ENCODE measurements at regions of chr19 and their contacts with region 1.

Region 1: DNA sequence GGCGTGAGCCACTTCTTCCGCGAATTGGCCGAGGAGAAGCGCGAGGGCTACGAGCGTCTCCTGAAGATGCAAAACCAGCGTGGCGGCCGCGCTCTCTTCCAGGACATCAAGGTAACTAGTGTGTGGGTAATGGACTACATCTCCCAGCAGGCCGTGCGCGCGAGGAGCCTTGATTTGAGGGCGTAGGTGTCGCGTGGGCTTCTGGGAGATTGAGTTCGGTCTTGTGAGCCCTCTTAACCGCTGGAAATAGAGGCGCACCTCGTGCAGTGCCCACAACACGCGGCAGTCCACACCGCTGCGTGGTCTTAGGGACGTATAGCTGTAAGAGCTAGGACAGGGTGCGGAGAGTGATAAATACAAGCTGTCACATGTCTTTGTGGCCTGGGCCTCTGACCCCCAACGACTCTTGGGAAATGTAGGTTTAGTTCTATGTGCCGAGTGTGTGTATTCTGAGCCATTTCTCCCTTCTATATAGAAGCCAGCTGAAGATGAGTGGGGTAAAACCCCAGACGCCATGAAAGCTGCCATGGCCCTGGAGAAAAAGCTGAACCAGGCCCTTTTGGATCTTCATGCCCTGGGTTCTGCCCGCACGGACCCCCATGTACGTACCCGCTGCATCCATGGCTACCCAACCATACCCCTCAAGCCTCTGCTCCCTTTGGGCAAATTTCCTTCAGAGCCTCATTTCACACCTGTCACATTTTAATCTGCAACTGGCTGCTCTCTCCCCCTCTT is 864 bp downstream of the FTL start:
- DNase-seq: peak; percentile 78 to 95 (median 89)
- ATAC-seq: peak; percentile 63 to 77 (median 69)
- H3K4me3 ChIP-seq: peak overlapping the region; percentile 80 to 81
- H3K4me3 Mint-ChIP-seq: peak overlapping the region; percentile 98 to 100 (median 100)
- H3K27ac ChIP-seq: peak overlapping the region; percentile 64
- H3K27ac Mint-ChIP-seq: peak overlapping the region; percentile 99 to 100
- H3K4me1 ChIP-seq: peaks cover 22 to 58% of the 10 kb centered on the region in 2 experiments
- H3K4me1 Mint-ChIP-seq: peaks cover 58 to 71% (median 62%) of the 10 kb centered on the region in 3 donors
- H3K27me3 ChIP-seq: no peaks in the 10 kb centered on the region
- H3K27me3 Mint-ChIP-seq: no peaks in the 10 kb centered on the region

Region 2: GRCh38 chr19:48899781-48900476 is 66.0 kb before region 1 on chr19 and contains the start of gene NUCB1:
- CTCF ChIA-PET with region 1: interaction called in 1 of 2 experiments, 23 read pairs
- POLR2A ChIA-PET with region 1: no interaction called
- DNase-seq: peak; percentile 94 to 99 (median 97)
- ATAC-seq: peak; percentile 93 to 96 (median 95)
- H3K4me3 ChIP-seq: peak within 1 kb of the TSS; percentile 72 to 89
- H3K4me3 Mint-ChIP-seq: peak within 1 kb of the TSS; percentile 91 to 99 (median 91)
- H3K27ac ChIP-seq: peak within 1 kb of the TSS; percentile 64
- H3K27ac Mint-ChIP-seq: peak within 1 kb of the TSS; percentile 97 to 98
- H3K4me1 ChIP-seq: peaks cover 2 to 48% of the 10 kb centered on the region in 2 experiments
- H3K4me1 Mint-ChIP-seq: peaks cover 30 to 52% (median 33%) of the 10 kb centered on the region in 3 donors
- H3K27me3 ChIP-seq: peaks cover 0 to 28% of the 10 kb centered on the region in 2 experiments
- H3K27me3 Mint-ChIP-seq: peaks cover under 1 to 7% of the 10 kb centered on the region in 2 donors
- total RNA-seq, gene NUCB1: 122 to 177 (median 165) TPM

Region 3: DNA sequence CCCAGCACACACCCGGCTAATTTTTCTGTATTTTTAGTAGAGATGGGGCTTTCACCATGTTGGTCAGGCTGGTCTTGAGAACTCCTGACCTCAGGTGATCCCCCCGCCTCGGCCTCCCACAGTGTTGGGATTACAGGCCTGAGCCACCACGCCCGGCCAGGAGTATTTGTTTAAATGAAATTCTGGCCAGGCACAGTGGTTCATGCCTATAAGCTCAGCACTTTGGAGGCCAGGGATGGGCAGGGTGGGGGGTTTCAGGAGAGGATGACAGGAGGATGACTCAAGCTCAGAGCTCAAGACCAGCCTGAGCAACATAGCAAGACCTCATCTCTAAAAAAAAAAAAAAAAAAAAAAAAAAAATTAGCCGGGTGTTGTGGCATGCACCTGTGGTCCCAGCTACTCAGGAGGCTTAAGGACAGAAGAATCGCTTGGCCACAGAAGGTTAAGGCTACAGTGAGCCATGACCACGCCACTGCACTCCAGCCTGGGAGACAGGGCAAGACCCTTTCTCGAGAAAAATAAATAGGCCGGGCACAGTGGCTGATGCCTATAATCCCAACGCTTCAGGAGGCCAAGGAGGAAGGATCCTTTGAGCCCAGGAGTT is 40.6 kb before region 1 on chr19:
- CTCF ChIA-PET with region 1: interaction called, 5 to 14 read pairs
- POLR2A ChIA-PET with region 1: no interaction called
- DNase-seq: no peak
- ATAC-seq: no peak
- H3K4me3 ChIP-seq: no peak overlapping the region
- H3K4me3 Mint-ChIP-seq: no peak overlapping the region
- H3K27ac ChIP-seq: no peak overlapping the region
- H3K27ac Mint-ChIP-seq: no peak overlapping the region
- H3K4me1 ChIP-seq: no peaks in the 10 kb centered on the region
- H3K4me1 Mint-ChIP-seq: peaks cover 3 to 8% (median 4%) of the 10 kb centered on the region in 3 donors
- H3K27me3 ChIP-seq: no peaks in the 10 kb centered on the region
- H3K27me3 Mint-ChIP-seq: no peaks in the 10 kb centered on the region

Region 4: GRCh38 chr19:48954595-48955310 is 11.2 kb before region 1 on chr19 and contains the start of gene BAX:
- CTCF ChIA-PET with region 1: interaction called in 1 of 2 experiments, 4 read pairs
- POLR2A ChIA-PET with region 1: interaction called, 5 to 11 read pairs
- DNase-seq: peak; percentile 45 to 89 (median 70)
- ATAC-seq: peak; percentile 91 to 95 (median 92)
- H3K4me3 ChIP-seq: peak within 1 kb of the TSS; percentile 93 to 100
- H3K4me3 Mint-ChIP-seq: peak within 1 kb of the TSS; percentile 85 to 92 (median 89)
- H3K27ac ChIP-seq: peak within 1 kb of the TSS; percentile 83
- H3K27ac Mint-ChIP-seq: peak within 1 kb of the TSS; percentile 93
- H3K4me1 ChIP-seq: peaks cover 6 to 29% of the 10 kb centered on the region in 2 experiments
- H3K4me1 Mint-ChIP-seq: peaks cover 26 to 33% (median 32%) of the 10 kb centered on the region in 3 donors
- H3K27me3 ChIP-seq: no peaks in the 10 kb centered on the region
- H3K27me3 Mint-ChIP-seq: no peaks in the 10 kb centered on the region
- total RNA-seq, gene BAX: 76.6 to 201 (median 183) TPM